Dorsolateral prefrontal cortex (tissue), 120 donors: ENCODE measurements at regions of chr14 and their contacts with region 1.

Region 1: DNA sequence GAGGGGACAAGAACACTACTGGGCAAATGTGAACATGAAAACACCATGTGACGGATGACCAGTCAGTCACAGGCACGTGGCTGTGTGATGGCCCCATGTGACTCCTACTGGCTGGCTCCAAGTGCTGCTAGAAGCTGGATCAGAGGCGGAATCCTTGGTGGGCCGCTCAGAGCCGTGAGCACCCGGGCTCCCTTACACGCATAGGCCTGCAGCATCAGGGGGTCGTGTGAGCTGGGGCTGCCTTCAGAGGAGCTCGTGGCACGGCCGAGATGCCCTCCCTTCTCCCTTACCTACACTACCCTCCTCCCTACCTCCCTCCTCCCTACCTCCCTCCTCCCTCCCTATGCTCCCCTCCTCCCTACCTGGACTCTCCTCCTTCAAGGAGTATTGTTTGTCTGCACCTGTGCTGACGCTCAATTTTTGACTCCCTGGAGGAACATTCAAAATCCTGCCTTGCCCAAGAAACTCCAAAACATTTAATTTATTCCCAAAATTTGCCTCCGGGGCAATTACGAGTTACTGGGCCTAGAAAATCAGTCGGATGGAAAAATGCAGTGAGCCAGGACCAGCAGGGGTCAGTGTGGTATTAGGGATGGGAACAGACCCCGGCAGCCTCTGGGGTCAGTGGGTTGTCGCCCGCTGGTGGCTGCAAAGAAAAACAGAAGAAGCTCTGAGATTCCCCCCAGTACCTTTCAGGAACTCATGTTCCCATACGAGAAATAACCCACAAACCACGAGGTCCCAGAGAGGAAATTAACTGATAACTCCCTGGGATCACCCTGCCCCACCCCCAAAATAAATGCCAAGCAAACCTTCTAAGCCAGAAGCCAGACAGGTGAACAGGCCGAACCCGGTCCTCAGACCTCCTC is 61.2 kb downstream of the C14orf132 start:
- DNase-seq: peak; percentile 68 to 85 (median 82)
- H3K4me3 ChIP-seq: peak overlapping the region in 5 of 59 donors; percentile 5 to 31 (median 24)
- H3K27ac ChIP-seq: peak overlapping the region in 38 of 59 donors; percentile 1 to 84 (median 61)
- H3K27me3 ChIP-seq: no peaks in the 10 kb centered on the region
- CTCF ChIP-seq: peak; percentile 63 to 98 (median 93)

Region 2: DNA sequence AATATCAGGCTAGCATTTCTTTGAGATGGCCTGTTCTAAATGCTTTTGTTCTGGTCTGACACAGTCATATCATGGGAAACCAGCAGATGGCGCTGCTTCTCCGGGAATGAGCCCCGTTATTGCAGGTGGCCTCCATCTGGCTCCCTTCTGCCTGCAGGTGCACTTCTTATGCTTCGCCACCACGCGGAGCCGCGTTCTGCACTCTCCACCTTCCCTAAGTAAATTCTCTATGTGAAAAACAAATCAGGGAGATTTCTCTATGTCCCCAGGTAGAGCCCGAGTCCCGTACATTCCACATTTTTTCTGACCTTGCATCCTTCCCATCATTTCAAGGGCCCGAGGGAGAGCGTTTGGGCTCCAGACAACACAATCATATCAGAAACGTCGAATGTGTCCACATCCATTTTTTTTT is 539.4 kb before region 1 on chr14:
- intact Hi-C with region 1: loop called (anchors 5 to 10 kb)
- DNase-seq: peak; percentile 73 to 94 (median 88)
- H3K4me3 ChIP-seq: peak overlapping the region in 3 of 59 donors; percentile 2 to 9 (median 6)
- H3K27ac ChIP-seq: no peak overlapping the region
- H3K27me3 ChIP-seq: no peaks in the 10 kb centered on the region
- CTCF ChIP-seq: peak; percentile 89 to 100 (median 98)

Region 3: GRCh38 chr14:96038920-96039632 is 61.3 kb before region 1 on chr14 and contains the start of gene C14orf132:
- intact Hi-C with region 1: loop called (anchors 2 to 5 kb)
- DNase-seq: peak; percentile 66 to 86 (median 76)
- H3K4me3 ChIP-seq: peak within 1 kb of the TSS; percentile 45 to 98 (median 85)
- H3K27ac ChIP-seq: peak within 1 kb of the TSS in 58 of 59 donors; percentile 42 to 96 (median 89)
- H3K27me3 ChIP-seq: no peaks in the 10 kb centered on the region
- CTCF ChIP-seq: peak in 7 of 56 donors; percentile 2 to 27 (median 16)
- total RNA-seq, gene C14orf132: 92.3 to 230 (median 143) TPM

Region 4: DNA sequence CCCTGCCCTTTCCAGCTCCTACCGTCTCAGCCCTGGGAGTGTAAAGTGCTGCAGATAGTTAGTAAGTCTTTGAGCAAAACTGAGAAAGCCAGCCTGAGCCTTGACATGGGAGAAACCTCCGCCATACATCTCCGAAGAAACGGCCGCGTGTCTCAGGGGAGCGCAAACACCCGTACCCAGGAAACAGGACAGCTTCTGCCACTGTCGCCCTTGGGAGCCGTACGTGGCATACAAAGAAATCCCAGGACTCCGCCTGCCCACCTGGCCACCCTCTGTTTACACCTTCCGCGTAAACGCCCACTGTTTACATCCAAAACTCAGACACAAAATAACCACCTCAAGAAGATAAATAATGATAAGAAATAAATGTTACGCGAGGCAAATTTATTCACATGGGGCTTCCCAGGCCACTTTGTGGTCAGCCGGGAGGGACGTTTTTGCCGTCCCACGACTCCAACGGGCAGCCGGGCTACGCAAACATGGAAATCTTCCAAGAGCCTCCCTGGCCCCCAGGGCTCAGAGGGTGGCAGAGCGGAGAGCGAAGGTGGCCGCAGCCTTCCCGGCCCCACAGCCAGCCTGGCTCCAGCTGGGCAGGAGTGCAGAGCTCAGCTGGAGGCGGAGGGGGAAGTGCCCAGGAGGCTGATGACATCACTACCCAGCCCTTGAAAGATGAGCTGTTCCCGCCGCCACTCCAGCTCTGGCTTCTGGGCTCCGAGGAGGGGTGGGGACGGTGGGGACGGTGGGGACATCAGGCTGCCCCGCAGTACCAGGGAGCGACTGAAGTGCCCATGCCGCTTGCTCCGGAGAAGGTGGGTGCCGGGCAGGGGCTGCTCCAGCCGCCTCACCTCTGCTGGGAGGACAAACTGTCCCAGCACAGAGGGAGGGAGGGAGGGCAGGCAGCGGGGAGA is 104.0 kb after region 1 on chr14 and contains the start of gene BDKRB2:
- intact Hi-C with region 1: loop called in 1 of 2 experiments (anchors 5 kb)
- DNase-seq: peak; percentile 28 to 84 (median 68)
- H3K4me3 ChIP-seq: peak within 1 kb of the TSS; percentile 32 to 79 (median 58)
- H3K27ac ChIP-seq: peak within 1 kb of the TSS in 35 of 59 donors; percentile 5 to 88 (median 69)
- H3K27me3 ChIP-seq: peaks cover 0 to 6% (median 0%) of the 10 kb centered on the region in 45 donors
- CTCF ChIP-seq: no peak
- total RNA-seq, gene BDKRB2: 0.23 to 3.5 (median 1.1) TPM

Region 5: DNA sequence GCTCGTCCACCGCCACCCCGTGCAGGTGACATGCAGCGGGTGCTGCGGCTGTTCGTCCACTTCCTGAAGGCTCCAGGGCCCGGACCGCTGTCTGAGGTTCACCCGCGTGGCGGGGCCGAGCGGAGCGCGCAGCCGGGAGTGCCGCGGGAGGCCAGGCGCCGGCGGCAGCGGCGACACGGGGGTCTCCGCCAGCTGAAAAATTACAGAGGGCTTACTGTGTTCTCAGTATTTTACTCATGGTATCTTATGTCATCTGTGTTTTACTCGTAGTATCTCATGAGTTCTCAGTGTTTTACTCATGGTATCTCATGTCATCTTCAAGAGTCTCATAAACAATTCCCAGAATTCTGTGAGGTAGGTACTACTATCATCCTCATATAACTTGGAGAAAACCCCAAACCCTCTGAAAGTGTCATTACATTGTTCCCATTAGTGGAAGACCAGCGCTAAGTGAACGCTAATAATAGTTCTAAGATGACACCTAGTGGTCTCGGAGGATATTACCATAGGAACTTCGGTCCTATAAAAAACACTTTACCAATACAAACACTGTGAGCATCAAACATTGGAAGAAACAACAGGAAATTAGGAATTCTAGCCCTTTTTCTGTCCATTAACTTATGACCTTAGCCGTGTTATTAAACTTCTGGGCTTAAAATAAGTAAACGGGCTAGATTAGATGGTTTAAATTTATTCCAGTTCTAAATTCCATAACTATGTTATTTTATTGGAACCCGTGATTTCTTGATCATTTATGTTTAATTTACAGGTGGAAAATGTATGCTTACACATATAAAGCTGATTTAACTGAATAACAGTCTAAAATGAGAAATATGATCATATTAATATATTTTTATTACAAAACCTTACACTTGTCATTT is 324.0 kb after region 1 on chr14:
- intact Hi-C with region 1: loop called (anchors 2 to 5 kb)
- DNase-seq: peak in 2 of 10 donors; percentile 15 to 52
- H3K4me3 ChIP-seq: peak overlapping the region; percentile 27 to 70 (median 55)
- H3K27ac ChIP-seq: peak overlapping the region in 23 of 59 donors; percentile 9 to 89 (median 72)
- H3K27me3 ChIP-seq: no peaks in the 10 kb centered on the region
- CTCF ChIP-seq: peak; percentile 72 to 96 (median 86)